Right ventricle myocardium superior (tissue), 1 donor: ENCODE measurements at regions of chr15 and their contacts with region 1.

Region 1: DNA sequence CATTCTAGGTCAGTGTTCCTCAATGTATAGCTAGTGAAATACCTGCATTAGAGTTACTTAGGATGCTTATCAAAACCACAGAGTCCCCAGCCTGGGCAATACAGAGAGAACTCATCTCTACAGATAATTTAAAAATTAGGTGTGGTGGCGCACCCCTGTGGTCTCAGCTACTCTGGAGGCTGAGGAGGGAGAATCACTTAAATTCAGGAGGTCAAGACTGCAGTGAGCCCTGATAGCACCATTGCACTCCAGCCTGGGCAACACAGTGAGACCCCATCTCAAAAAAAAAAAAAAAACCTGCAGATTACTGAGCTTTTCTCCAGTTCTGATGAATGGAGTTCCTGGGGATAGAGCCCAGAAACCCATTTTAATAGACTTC is 10.1 kb upstream of the MINDY2 start:
- DNase-seq: no peak
- ATAC-seq: no peak

Region 2: DNA sequence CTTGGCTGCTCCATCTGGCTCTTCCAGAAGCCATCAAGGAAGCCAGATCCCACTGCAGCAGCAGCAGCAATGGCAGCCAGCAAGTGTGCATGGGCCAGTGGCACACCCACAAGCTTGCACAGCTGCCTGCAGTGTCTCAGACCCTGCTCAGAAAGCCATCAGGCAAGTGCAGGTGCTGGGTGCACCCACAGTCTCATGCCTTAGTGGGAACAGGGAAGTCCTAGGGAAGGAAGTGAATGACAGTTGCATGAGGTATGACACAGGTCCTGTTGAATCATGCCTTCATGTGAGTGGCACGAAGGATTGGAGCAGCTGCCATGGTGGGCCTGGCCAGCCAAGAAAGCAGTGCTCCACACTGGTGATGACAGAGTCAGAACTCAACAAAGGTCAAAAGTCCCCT is 528.8 kb before region 1 on chr15:
- intact Hi-C with region 1: loop called (anchors 10 kb)
- DNase-seq: no peak
- ATAC-seq: no peak